OCI-LY7 (cell line): ENCODE measurements at regions of chr2 and their contacts with region 1.

Region 1: DNA sequence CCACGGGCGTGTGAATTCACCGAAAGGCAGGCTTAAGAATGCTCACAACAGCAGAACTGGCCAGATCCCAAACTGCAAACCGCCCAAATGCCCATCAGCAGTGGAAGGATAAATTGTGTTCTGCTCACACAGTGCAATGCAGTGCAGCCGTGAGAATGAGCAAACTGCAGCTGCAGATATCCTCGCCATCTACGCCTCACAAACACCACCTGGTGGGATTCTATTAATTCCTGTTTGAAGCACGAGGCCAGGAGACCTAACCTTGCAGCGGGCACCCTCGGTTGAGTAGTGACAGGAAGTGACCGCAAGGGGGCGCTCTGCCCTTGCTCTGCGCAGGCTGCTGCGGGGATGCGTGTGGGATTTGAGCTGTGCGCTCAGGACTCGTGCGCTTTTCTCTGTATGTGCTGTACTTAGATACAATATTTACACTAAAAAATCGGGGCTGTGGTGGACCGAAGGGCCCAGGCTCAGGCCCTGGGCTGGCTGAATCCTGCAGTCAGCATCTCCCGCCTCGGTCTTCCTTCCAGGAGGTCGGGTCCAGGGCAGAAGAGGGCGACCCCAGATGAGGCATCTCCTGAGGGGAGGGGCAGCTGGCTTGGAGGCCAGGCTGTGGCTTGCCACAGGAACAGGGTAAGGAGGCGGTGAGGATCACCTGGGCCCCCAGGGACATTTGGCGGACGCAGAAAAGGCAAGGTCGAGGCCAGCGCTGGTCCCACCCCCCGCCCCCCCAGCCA is 19.8 kb upstream of the PDIA6 start:
- DNase-seq: peak; percentile 87
- H3K4me3 ChIP-seq: no peak overlapping the region
- H3K27ac ChIP-seq: no peak overlapping the region
- H3K4me1 ChIP-seq: peaks cover 3% of the 10 kb centered on the region
- CTCF ChIP-seq: peak; percentile 98

Region 2: DNA sequence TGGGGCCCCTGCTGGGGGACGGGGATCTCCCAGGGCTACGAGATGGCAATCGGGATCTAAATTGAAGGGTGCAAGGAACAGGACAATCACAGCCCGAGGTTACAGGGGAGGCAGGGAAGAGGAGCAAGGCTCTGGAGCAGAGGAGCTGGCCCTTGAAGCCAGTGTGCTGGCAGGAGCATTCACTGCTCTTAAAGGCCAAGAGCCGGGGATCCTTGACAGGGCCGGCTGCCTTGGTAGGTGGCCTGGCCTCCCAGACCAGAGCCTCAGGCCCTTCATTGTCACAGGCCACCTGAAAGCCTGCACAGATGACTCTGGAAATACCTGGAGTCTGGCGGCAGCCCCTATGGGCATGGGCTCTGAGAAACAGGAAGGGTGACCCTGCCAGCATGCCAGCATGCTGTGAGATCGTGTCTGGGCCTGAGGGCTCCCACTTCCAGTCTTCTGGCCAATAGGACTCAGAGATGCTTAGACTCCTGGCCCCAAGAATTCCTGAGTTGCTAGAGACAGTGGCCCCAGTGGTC is 58.5 kb before region 1 on chr2:
- CTCF ChIA-PET with region 1: no interaction called
- POLR2A ChIA-PET with region 1: no interaction called
- intact Hi-C with region 1: no loop called
- DNase-seq: no peak
- H3K4me3 ChIP-seq: no peak overlapping the region
- H3K27ac ChIP-seq: no peak overlapping the region
- H3K4me1 ChIP-seq: no peaks in the 10 kb centered on the region
- CTCF ChIP-seq: no peak

Region 3: DNA sequence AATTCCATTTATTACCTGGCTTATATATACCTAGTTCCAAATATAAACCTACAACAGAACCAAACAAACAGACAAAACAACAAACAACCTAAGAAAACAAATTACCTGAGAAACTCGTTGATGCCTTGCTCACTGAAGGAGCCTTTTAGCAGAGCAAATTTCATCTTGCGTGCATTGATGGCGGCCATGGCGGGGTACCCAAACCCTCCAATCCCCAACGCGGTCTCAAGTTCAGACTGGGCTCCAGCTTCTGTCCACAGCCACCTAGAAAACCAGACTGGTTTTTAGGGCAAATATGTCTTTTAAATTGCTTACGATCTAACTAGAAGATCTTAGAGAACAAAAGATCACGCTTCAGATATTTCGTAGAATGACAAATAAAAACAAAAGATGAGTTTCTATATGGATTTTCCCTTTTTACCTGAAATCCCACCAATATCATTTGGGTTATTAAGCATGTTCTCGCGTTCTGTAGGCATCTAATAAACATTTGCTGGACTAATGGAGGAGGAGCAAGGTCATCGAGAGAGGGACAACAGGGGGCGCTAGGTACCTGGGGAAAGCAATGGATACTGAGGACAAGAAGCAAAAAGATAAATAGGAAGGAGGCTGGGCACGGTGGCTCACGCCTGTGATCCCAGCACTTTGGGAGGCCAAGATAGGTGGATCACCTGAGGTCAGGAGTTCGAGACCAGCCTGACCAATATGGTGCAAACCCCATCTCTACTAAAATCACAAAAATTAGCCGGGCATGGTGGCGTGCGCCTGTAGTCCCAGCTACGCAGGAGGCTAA is 45.0 kb before region 1 on chr2:
- CTCF ChIA-PET with region 1: interaction called, 7 read pairs
- POLR2A ChIA-PET with region 1: interaction called, 3 read pairs
- intact Hi-C with region 1: loop called (anchors 1 kb)
- DNase-seq: peak; percentile 18
- H3K4me3 ChIP-seq: no peak overlapping the region
- H3K27ac ChIP-seq: no peak overlapping the region
- H3K4me1 ChIP-seq: no peaks in the 10 kb centered on the region
- CTCF ChIP-seq: peak; percentile 70

Region 4: DNA sequence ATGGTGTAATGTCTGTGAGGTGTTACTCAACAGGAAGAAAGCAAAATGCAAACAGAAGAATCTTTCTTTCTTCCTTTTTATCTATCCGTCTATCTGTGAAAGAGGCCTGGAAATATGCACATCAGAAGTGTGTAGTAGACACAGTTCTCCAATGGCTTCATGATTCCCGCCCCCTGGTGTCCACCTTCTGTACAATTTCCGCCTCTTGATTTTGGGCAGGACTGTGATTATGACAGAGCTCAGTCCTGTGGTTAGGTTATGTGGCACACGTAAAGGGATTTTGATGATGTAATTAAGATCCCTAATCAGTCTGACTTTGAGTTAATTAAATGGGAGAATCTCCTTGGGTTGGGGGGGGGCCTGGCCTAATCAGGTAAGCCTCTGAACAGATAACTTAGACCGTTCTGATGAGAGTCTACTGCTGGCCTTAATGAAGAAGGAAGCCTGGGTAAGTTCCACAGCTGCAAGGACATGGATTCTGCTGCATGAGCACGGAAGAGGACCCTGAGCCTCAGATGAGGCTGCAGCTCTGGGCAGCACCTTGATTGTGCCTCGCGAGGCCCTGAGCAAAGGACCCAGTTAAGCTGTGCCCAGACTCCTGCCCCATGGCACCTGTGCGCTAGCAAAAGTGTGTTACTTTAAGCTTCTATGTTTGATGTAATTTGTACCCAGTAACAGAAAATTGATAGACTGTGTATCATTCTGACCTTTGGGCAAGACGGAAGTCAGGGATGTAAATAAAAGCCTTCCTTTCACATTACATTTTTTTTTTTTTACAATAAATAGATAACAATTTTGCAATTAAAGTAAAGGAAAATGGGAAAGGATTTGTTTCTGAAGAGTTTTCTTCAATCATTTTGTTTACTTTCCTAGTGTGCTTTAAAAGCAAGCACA is 68.1 kb after region 1 on chr2:
- CTCF ChIA-PET with region 1: interaction called, 4 read pairs
- POLR2A ChIA-PET with region 1: no interaction called
- intact Hi-C with region 1: loop called (anchors 1 kb)
- DNase-seq: peak; percentile 34
- H3K4me3 ChIP-seq: no peak overlapping the region
- H3K27ac ChIP-seq: no peak overlapping the region
- H3K4me1 ChIP-seq: no peaks in the 10 kb centered on the region
- CTCF ChIP-seq: peak; percentile 72

Region 5: GRCh38 chr2:11499081-11499743 is 666.8 kb after region 1 on chr2:
- CTCF ChIA-PET with region 1: interaction called, 19 read pairs
- POLR2A ChIA-PET with region 1: no interaction called
- intact Hi-C with region 1: no loop called
- DNase-seq: no peak
- H3K4me3 ChIP-seq: no peak overlapping the region
- H3K27ac ChIP-seq: no peak overlapping the region
- H3K4me1 ChIP-seq: no peaks in the 10 kb centered on the region
- CTCF ChIP-seq: no peak

Region 6: GRCh38 chr2:11583840-11584524 is 751.6 kb after region 1 on chr2:
- CTCF ChIA-PET with region 1: no interaction called
- POLR2A ChIA-PET with region 1: no interaction called
- intact Hi-C with region 1: loop called (anchors 10 kb)
- DNase-seq: peak; percentile 59
- H3K4me3 ChIP-seq: no peak overlapping the region
- H3K27ac ChIP-seq: no peak overlapping the region
- H3K4me1 ChIP-seq: no peaks in the 10 kb centered on the region
- CTCF ChIP-seq: peak; percentile 94